Posterior vena cava (tissue), 2 donors: ENCODE measurements at regions of chr7 and their contacts with region 1.

Region 1: GRCh38 chr7:4001742-4002141 is 680.4 kb upstream of the FOXK1 start:
- DNase-seq: no peak

Region 2: DNA sequence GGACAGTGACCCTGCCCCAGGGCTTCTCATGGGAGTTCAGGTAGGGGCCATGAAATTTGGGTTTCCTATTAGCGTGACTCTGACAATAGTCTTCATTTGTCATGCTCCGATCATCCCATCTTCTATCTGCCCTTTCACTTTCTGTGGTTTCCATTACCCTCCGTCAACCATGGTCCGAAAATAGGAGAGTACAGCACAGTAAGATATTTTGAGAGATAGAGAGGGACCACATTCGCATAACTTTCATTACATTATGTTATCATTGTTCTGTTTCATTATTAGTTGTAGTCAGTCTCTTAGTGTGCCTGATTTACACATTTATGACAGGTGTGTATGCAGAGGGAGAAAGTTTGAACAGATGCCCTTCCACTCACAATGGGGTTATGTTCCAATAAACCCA is 51.5 kb before region 1 on chr7:
- intact Hi-C with region 1: no loop called
- DNase-seq: no peak

Region 3: DNA sequence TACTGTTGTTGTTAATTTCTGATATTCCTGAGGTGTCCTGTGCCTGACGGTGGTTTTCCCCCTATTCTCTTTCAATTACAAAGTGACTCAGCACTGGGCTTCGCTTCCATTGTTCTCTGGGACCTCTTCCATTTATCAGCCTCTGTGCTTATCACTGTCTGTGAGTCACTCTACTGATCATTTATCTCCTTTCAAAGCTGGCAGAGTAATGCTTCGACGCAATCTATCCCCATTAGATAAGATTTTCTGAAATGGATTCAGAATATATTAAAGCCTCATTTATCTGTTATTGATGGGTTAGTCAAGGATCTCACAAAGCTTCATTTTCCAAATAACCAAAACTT is 21.5 kb before region 1 on chr7:
- intact Hi-C with region 1: loop called in 1 of 2 experiments (anchors 1 kb)
- DNase-seq: no peak